CD14-positive monocyte (primary cell): ENCODE measurements at regions of chr10 and their contacts with region 1.

Region 1: DNA sequence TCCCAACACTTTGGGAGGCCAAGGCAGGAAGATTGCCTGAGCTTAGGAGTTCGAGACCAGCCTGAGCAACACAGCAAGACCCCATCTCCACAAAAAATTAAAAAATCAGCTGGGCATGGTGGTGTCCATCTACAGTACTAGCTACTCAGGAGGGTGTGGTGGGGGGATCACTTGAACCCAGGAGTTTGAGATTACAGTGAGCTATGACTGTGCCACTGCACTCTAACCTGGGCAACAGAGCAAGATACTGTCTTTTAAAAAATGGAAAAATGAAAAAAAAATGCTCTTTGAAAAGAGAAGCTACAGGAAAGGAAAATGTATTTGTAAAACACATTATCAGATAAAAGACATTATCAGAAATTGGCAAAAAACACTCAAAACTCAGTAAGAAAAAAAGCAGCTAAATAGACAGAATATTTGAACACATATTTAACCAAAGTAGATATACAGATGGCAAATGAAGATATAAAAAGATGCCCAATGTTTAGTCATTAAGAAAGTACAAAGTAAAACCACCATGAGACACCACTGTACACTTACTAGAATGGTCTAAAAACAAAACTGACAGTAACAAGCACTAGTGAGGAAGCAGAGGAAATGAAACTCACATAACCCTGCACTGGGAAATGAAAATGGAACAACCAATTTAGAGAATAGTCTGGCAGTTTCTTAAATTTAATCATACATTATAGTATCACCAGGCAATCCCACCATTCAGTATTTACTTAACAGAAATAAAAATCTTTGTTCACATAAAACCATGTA is 40.5 kb downstream of the NRBF2 start:
- DNase-seq: peak; percentile 32 to 61 (median 45)
- H3K4me3 ChIP-seq: peak overlapping the region in 1 of 3 experiments; percentile 9
- H3K4me3 Mint-ChIP-seq: peak overlapping the region in 1 of 2 donors; percentile 69
- H3K27ac ChIP-seq: peak overlapping the region; percentile 14 to 24
- H3K27ac Mint-ChIP-seq: peak overlapping the region; percentile 66 to 79 (median 74)
- H3K4me1 ChIP-seq: peaks cover 20 to 26% of the 10 kb centered on the region in 2 donors
- H3K4me1 Mint-ChIP-seq: peaks cover 30% of the 10 kb centered on the region
- H3K27me3 ChIP-seq: no peaks in the 10 kb centered on the region
- H3K27me3 Mint-ChIP-seq: no peaks in the 10 kb centered on the region
- CTCF ChIP-seq: no peak

Region 2: DNA sequence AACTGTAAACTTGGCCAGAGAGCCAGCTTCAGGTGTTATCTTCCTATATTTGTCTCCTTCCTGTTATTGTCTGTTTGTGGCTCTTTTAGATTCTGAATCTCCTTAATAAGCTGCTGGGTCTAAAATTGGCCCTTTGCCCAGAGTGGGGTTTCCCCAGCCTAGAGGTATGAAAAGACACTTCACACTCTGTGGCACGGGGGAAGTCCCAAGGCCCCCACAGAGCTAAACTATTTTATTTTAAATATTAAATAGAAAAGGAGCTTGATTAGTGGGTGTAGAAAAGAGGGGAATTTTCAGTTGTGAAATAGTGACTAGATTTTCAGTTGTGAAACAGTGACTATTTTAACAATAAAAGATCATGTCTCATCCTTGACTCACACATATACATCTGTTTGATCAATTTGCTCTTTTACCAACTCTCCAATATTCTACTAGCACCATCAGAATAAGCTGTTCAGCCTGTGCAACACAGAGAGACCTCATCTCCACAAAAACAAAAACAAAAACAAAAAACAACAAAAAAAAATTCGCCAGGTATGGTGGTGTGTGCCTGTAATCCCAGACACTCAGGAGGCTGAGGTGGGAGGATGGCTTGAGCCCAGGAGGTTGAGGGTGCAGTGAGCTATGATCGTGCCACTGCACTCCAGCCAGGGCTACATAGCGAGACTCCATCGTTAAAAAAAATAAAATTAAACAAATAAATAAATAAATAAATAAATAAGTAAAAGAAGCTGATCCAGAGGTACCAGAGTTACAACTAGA is 394.0 kb before region 1 on chr10:
- intact Hi-C with region 1: no loop called
- DNase-seq: peak; percentile 18 to 82 (median 28)
- H3K4me3 ChIP-seq: no peak overlapping the region
- H3K4me3 Mint-ChIP-seq: peak overlapping the region in 1 of 2 donors; percentile 19
- H3K27ac ChIP-seq: no peak overlapping the region
- H3K27ac Mint-ChIP-seq: no peak overlapping the region
- H3K4me1 ChIP-seq: no peaks in the 10 kb centered on the region
- H3K4me1 Mint-ChIP-seq: peaks cover 6% of the 10 kb centered on the region
- H3K27me3 ChIP-seq: peaks cover 3 to 6% of the 10 kb centered on the region in 2 donors
- H3K27me3 Mint-ChIP-seq: peaks cover 3 to 21% (median 14%) of the 10 kb centered on the region in 3 donors
- CTCF ChIP-seq: no peak

Region 3: DNA sequence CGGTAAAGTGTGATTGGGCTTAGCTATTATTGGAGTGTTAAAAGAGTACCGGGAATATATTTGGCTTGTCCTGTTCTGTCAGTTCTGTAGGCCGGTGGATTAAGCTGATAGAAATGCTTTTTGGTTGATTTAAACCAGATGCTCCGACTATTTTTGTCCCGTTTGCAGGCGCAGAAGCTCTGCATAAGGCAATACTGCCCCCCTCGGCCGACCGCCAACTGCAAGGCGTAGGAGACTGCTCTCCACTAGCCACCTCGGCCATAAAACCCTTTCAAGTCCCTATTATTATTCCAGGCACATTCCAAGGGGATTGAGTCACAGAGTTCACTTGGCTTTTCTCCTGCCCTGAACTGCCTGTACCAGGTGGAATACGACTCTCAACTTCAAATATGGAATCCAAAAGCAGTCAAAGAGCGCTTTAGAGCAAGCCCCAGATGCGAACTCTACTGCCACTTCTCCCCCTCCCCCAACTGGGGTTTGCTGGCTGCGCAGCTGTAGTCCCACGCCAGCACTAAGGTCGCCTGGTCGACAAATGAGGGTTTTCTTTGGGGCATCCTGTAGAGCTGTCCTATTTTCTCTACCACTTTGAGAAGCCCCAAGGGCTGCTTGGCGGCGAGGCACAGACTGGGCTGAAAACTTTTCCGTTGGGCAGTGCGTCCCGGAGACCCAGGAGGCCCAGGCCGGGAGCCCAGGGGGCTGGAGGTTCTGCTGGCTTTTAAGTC is 455.9 kb after region 1 on chr10:
- intact Hi-C with region 1: loop called in 1 of 2 experiments (anchors 10 kb)
- DNase-seq: peak; percentile 55 to 74 (median 70)
- H3K4me3 ChIP-seq: peak overlapping the region; percentile 66 to 85 (median 81)
- H3K4me3 Mint-ChIP-seq: peak overlapping the region; percentile 94 to 95
- H3K27ac ChIP-seq: peak overlapping the region; percentile 84 to 86
- H3K27ac Mint-ChIP-seq: peak overlapping the region; percentile 86 to 96 (median 92)
- H3K4me1 ChIP-seq: peaks cover 42 to 50% of the 10 kb centered on the region in 2 donors
- H3K4me1 Mint-ChIP-seq: peaks cover 47% of the 10 kb centered on the region
- H3K27me3 ChIP-seq: no peaks in the 10 kb centered on the region
- H3K27me3 Mint-ChIP-seq: no peaks in the 10 kb centered on the region
- CTCF ChIP-seq: peak; percentile 87